Transverse colon (tissue), 4 donors: ENCODE measurements at regions of chr12 and their contacts with region 1.

Region 1: GRCh38 chr12:110677206-110677911 is 11.6 kb downstream of the HVCN1 start:
- DNase-seq: no peak
- H3K4me3 ChIP-seq: no peak overlapping the region
- H3K27ac ChIP-seq: peak overlapping the region in 1 of 4 donors; percentile 0
- H3K4me1 ChIP-seq: peaks cover 0 to 7% (median 0%) of the 10 kb centered on the region in 4 donors
- H3K27me3 ChIP-seq: no peaks in the 10 kb centered on the region
- CTCF ChIP-seq: no peak
- EP300 ChIP-seq: no peak
- POLR2A ChIP-seq: no peak

Region 2: GRCh38 chr12:110704748-110705147 is 27.4 kb after region 1 on chr12:
- in situ Hi-C with region 1: no loop called
- intact Hi-C with region 1: no loop called
- DNase-seq: peak; percentile 44
- H3K4me3 ChIP-seq: no peak overlapping the region
- H3K27ac ChIP-seq: no peak overlapping the region
- H3K4me1 ChIP-seq: no peaks in the 10 kb centered on the region
- H3K27me3 ChIP-seq: no peaks in the 10 kb centered on the region
- CTCF ChIP-seq: peak; percentile 19 to 61 (median 41)
- EP300 ChIP-seq: no peak
- POLR2A ChIP-seq: no peak

Region 3: GRCh38 chr12:111196532-111196931 is 519.2 kb after region 1 on chr12:
- in situ Hi-C with region 1: no loop called
- intact Hi-C with region 1: loop called (anchors 2 kb)
- DNase-seq: no peak
- H3K4me3 ChIP-seq: no peak overlapping the region
- H3K27ac ChIP-seq: no peak overlapping the region
- H3K4me1 ChIP-seq: no peaks in the 10 kb centered on the region
- H3K27me3 ChIP-seq: peaks cover 15% of the 10 kb centered on the region
- CTCF ChIP-seq: no peak
- EP300 ChIP-seq: no peak
- POLR2A ChIP-seq: no peak